ENCODE measurements at regions of chr2 and their contacts with region 1.

Region 1: DNA sequence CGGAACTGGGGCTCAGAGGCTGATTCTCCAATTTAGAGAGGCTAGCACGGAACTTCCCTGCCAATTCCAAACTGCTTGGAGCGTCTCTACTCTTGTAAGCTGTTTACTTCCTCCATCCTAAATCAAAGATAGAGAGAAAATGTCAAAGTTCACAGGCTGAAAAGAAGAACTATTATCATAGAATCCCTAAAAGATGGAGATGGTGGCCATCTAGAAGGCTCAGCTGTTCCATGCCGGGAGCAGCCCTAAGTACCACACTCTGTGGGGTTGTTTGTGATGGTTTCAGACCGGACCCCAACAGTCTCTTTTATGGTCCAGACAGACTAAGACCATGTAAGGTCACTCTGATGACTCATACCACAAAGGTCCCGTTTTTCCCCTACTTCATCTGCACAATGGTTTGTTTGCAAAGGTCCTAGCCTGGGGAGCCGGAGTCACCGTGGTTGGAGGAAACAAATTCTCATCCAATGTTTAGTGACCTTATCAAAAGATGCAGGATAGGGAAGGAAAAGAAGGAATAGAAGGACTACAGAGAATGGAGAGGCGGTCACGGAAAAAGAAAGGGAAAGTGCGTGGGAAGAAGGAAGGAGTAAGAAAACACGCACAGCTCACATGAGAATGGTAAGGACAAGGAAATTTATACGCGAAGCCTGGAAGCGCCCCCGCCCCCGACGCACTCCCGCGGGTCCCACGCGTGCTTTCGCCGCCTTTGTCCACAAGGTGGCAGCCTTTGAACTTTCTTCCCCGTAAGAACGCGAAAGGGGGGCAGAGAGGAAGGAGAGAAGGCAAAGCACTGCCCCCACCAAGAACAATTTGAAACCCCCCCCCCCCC is 453 bp upstream of the ANTXR1 start:
- DNase-seq: peak; percentile 68
- ATAC-seq: peak; percentile 51
- H3K4me3 ChIP-seq: peak overlapping the region; percentile 89
- H3K27ac ChIP-seq: peak overlapping the region; percentile 11
- H3K4me1 ChIP-seq: peaks cover 8% of the 10 kb centered on the region; the same call in 1 of the 2 replicates
- H3K27me3 ChIP-seq: no peaks in the 10 kb centered on the region
- CTCF ChIP-seq: peak; percentile 72

Region 2: GRCh38 chr2:68943581-68944568 is 68.7 kb before region 1 on chr2:
- CTCF ChIA-PET with region 1: interaction called, 8 read pairs
- POLR2A ChIA-PET with region 1: no interaction called
- intact Hi-C with region 1: loop called (anchors 1 kb)
- DNase-seq: peak; percentile 89
- ATAC-seq: peak; percentile 93
- H3K4me3 ChIP-seq: no peak overlapping the region
- H3K27ac ChIP-seq: no peak overlapping the region
- H3K4me1 ChIP-seq: peaks cover 10% of the 10 kb centered on the region; the same call in 1 of the 2 replicates
- H3K27me3 ChIP-seq: no peaks in the 10 kb centered on the region
- CTCF ChIP-seq: peak; percentile 88

Region 3: DNA sequence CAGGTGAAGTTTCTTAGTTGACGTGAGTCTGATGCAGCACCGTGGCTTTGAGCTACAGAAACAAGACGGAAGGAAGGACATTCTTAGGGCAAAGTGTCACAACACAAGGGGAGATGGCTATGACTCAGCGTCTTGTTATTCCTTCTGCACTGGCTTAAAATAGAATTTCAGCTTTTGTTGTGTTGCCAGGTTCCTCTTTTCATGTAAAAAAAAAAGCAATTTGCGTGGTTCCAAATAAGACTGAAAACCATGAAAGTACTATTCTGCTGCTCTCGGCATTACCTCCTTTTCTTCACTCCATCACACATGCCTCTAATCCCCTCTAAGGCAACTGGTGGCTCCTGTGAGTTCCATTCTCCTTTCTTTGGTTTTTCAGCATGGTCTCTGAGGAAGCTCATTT is 150.6 kb after region 1 on chr2:
- CTCF ChIA-PET with region 1: no interaction called
- POLR2A ChIA-PET with region 1: no interaction called
- intact Hi-C with region 1: loop called (anchors 10 kb)
- DNase-seq: peak; percentile 81
- ATAC-seq: peak; percentile 89
- H3K4me3 ChIP-seq: no peak overlapping the region
- H3K27ac ChIP-seq: no peak overlapping the region
- H3K4me1 ChIP-seq: peaks cover 18% of the 10 kb centered on the region
- H3K27me3 ChIP-seq: no peaks in the 10 kb centered on the region
- CTCF ChIP-seq: no peak

Region 4: DNA sequence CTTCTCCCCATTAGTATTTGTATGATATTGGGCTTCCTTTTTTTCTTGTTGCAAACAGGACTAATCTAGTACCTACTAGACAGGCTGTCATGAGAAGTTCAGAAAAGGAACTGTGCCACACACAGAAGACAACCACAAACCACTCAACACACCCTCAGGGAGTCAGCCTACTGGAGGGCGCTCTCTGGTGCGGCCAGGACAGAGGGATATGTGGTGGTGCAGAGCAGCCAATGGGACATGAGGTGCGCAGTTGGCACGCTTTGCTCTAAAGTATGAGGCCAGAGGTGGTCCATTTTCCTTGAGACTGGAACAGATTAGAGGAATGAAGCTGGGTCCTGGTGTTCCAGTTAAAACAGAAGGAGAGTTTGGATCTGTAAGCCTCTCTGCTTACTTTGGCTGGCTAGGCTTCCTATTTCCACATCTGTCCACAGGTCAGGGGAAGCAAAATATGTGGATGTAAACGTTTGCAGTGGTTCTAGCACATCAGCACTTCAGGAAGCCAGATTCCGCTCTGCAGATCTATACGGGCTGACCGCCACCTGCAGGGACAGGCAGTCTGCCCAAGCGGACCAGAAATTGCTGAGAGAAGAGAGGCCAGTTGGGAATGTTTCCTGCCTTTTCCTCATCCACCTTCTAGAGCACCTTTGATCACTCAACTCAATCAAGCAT is 260.4 kb after region 1 on chr2:
- CTCF ChIA-PET with region 1: no interaction called
- POLR2A ChIA-PET with region 1: no interaction called
- intact Hi-C with region 1: no loop called
- DNase-seq: no peak
- ATAC-seq: no peak
- H3K4me3 ChIP-seq: no peak overlapping the region
- H3K27ac ChIP-seq: no peak overlapping the region
- H3K4me1 ChIP-seq: no peaks in the 10 kb centered on the region
- H3K27me3 ChIP-seq: no peaks in the 10 kb centered on the region
- CTCF ChIP-seq: no peak